ENCODE measurements at regions of chr1 and their contacts with region 1.

Region 1: GRCh38 chr1:92536980-92537884 is 50.5 kb upstream of the GFI1 start:
- DNase-seq: peak; percentile 70 to 84 (median 75)
- H3K4me3 ChIP-seq: no peak overlapping the region
- H3K4me3 Mint-ChIP-seq: peak overlapping the region; percentile 58 to 83 (median 75)
- H3K27ac ChIP-seq: peak overlapping the region; percentile 46
- H3K27ac Mint-ChIP-seq: peak overlapping the region; percentile 66 to 91 (median 85)
- H3K4me1 ChIP-seq: peaks cover 35% of the 10 kb centered on the region
- H3K4me1 Mint-ChIP-seq: peaks cover 39 to 71% (median 53%) of the 10 kb centered on the region in 4 donors
- H3K27me3 ChIP-seq: no peaks in the 10 kb centered on the region
- H3K27me3 Mint-ChIP-seq: no peaks in the 10 kb centered on the region

Region 2: GRCh38 chr1:92583821-92584760 is 46.9 kb after region 1 on chr1:
- CTCF ChIA-PET with region 1: interaction called, 3 read pairs
- POLR2A ChIA-PET with region 1: interaction called, 25 read pairs
- intact Hi-C with region 1: loop called (anchors 1 kb)
- DNase-seq: peak; percentile 39 to 79 (median 67)
- H3K4me3 ChIP-seq: peak overlapping the region; percentile 13 to 29
- H3K4me3 Mint-ChIP-seq: peak overlapping the region; percentile 41 to 75 (median 66)
- H3K27ac ChIP-seq: no peak overlapping the region
- H3K27ac Mint-ChIP-seq: peak overlapping the region; percentile 44 to 84 (median 62)
- H3K4me1 ChIP-seq: peaks cover 44% of the 10 kb centered on the region
- H3K4me1 Mint-ChIP-seq: peaks cover 24 to 53% (median 40%) of the 10 kb centered on the region in 4 donors
- H3K27me3 ChIP-seq: no peaks in the 10 kb centered on the region
- H3K27me3 Mint-ChIP-seq: no peaks in the 10 kb centered on the region

Region 3: DNA sequence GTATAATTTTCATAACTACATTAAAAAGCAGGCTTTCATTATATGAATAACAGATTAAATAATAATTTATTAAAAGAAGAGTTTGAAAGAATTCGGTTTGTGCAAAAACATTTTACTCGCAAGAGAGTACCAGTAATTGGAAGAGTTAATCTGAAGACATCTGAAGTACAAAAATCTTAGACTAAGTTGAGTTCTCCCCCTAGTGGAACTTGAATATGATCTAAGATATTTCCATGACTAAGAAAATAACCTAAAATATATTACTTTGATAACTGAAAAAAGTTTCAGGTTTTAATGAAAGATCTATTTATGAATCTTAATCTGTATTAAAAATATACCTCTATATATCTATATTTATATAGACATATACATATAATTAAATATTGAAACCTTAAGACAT is 62.0 kb after region 1 on chr1:
- CTCF ChIA-PET with region 1: interaction called, 4 read pairs
- POLR2A ChIA-PET with region 1: interaction called, 4 read pairs
- intact Hi-C with region 1: loop called (anchors 5 kb)
- DNase-seq: peak in 4 of 5 donors; percentile 36 to 46 (median 42)
- H3K4me3 ChIP-seq: no peak overlapping the region
- H3K4me3 Mint-ChIP-seq: no peak overlapping the region
- H3K27ac ChIP-seq: no peak overlapping the region
- H3K27ac Mint-ChIP-seq: peak overlapping the region in 1 of 7 donors; percentile 25
- H3K4me1 ChIP-seq: no peaks in the 10 kb centered on the region
- H3K4me1 Mint-ChIP-seq: peaks cover 0 to 4% (median 1%) of the 10 kb centered on the region in 4 donors
- H3K27me3 ChIP-seq: no peaks in the 10 kb centered on the region
- H3K27me3 Mint-ChIP-seq: no peaks in the 10 kb centered on the region

Region 4: GRCh38 chr1:92623187-92623778 is 86.1 kb after region 1 on chr1:
- CTCF ChIA-PET with region 1: no interaction called
- POLR2A ChIA-PET with region 1: no interaction called
- intact Hi-C with region 1: no loop called
- DNase-seq: peak in 4 of 5 donors; percentile 29 to 42 (median 36)
- H3K4me3 ChIP-seq: no peak overlapping the region
- H3K4me3 Mint-ChIP-seq: no peak overlapping the region
- H3K27ac ChIP-seq: no peak overlapping the region
- H3K27ac Mint-ChIP-seq: no peak overlapping the region
- H3K4me1 ChIP-seq: no peaks in the 10 kb centered on the region
- H3K4me1 Mint-ChIP-seq: no peaks in the 10 kb centered on the region
- H3K27me3 ChIP-seq: no peaks in the 10 kb centered on the region
- H3K27me3 Mint-ChIP-seq: no peaks in the 10 kb centered on the region

Measured in CD4-positive, alpha-beta memory T cell (primary cell).